Astrocyte of the cerebellum (primary cell): ENCODE measurements at regions of chr1 and their contacts with region 1.

Region 1: DNA sequence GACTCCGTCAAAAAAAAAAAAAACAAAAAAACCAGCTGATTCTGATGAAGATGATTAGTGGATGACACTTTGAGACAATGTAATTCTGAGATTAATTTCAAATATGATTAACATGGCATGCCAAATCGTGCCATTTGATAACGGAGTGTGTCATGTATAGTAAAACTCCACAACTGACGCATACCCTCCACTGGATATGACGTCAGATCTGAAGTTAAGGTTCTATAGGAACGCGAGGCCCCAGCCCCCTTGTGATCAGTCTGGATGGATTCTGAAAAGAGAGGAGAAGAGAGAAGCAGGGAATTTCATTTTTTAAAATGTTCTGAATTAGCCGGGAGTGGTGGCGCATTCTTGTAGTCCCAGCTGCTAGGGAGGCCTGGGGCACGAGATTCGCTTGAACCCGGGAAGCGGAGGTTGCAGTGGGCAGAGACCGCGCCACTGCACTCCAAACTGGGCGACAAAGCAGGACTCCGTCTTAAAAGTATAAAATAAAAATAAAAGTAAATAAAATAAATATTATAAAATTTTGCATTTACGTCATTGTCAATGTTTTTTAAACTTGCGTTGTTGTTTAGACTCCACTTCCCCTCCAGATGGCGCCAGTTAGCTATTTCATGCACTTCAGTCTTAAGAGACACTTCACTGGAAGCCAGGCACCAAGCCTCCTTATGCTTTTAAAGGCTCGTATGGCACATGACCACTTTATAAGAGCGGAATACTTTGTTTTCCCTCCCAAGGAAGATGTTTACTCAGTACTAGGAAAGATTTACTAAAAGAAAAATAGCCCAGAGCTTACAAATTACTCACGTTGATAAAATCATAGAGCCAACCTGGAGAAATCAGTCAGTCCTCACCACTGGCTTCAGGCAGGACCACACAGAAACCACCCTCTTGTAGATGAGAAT is 65.5 kb downstream of the UBE2U start:
- DNase-seq: peak; percentile 85
- H3K4me3 ChIP-seq: no peak overlapping the region
- CTCF ChIP-seq: peak; percentile 74

Region 2: GRCh38 chr1:64663668-64664067 is 394.8 kb after region 1 on chr1:
- in situ Hi-C with region 1: loop called (anchors 25 kb)
- DNase-seq: no peak
- H3K4me3 ChIP-seq: no peak overlapping the region
- CTCF ChIP-seq: peak; percentile 15

Region 3: GRCh38 chr1:64823691-64824476 is 555.0 kb after region 1 on chr1:
- in situ Hi-C with region 1: loop called (anchors 25 kb)
- DNase-seq: peak; percentile 90
- H3K4me3 ChIP-seq: no peak overlapping the region
- CTCF ChIP-seq: peak; percentile 70